ENCODE measurements at regions of chr12 and their contacts with region 1.

Region 1: DNA sequence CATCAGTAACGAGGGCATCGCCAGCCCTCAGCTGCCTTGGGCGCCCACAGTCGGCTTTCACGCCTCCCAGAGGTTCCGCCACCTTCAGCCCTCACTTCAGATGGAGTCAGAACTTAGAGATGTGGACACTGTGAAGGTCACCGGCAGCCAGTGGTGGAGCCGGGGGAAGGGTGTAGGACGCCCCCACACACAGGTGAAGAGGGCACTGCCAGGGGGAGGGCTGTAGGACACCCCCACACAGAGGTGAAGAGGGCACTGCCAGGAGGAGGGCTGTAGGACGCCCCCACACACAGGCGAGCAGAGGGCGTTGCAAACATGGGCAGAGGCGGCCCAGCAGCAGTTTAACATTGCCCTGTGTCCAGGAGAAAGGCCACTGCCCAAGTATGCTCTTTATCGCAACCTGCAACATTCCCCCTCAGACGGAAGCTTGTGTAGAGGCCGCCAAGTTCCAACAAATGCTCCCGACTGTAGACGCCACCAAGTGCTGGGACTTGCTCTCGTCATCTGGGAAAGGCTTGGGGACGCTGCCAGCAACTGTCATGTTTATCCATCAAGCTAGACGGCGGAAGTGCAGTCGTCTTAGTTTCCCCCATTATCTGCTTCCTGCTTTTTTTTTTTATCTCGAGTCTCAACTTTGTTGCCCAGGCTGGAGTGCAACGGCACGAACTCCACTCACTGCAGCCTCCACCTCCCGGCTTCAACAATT is 4.9 kb upstream of the ANKLE2 start:
- DNase-seq: no peak
- H3K4me3 Mint-ChIP-seq: no peak overlapping the region
- H3K27ac Mint-ChIP-seq: no peak overlapping the region
- H3K4me1 Mint-ChIP-seq: peaks cover 58% of the 10 kb centered on the region
- H3K27me3 Mint-ChIP-seq: no peaks in the 10 kb centered on the region

Region 2: GRCh38 chr12:132788375-132789098 is 22.0 kb after region 1 on chr12:
- CTCF ChIA-PET with region 1: no interaction called
- POLR2A ChIA-PET with region 1: no interaction called
- DNase-seq: no peak
- H3K4me3 Mint-ChIP-seq: no peak overlapping the region
- H3K27ac Mint-ChIP-seq: peak overlapping the region; percentile 36
- H3K4me1 Mint-ChIP-seq: no peaks in the 10 kb centered on the region
- H3K27me3 Mint-ChIP-seq: no peaks in the 10 kb centered on the region

Region 3: GRCh38 chr12:132904718-132905328 is 138.3 kb after region 1 on chr12:
- CTCF ChIA-PET with region 1: interaction called, 10 read pairs
- POLR2A ChIA-PET with region 1: no interaction called
- DNase-seq: peak; percentile 90
- H3K4me3 Mint-ChIP-seq: peak overlapping the region; percentile 36
- H3K27ac Mint-ChIP-seq: peak overlapping the region; percentile 54
- H3K4me1 Mint-ChIP-seq: peaks cover 21% of the 10 kb centered on the region
- H3K27me3 Mint-ChIP-seq: peaks cover 14% of the 10 kb centered on the region